ENCODE measurements at regions of chr1 and their contacts with region 1.

Region 1: GRCh38 chr1:45490626-45491486 is at the start of gene TESK2:
- DNase-seq: peak; percentile 100
- ATAC-seq: peak; percentile 94
- H3K4me3 ChIP-seq: peak within 1 kb of the TSS; percentile 83
- H3K27ac ChIP-seq: peak within 1 kb of the TSS; percentile 32; the same call in 1 of the 2 replicates
- H3K4me1 ChIP-seq: peaks cover 4% of the 10 kb centered on the region; the same call in 1 of the 2 replicates
- H3K27me3 ChIP-seq: no peaks in the 10 kb centered on the region
- CTCF ChIP-seq: peak in 1 of 3 experiments; percentile 14; a peak in 1 of 6 replicates
- EP300 ChIP-seq: no peak
- POLR2A ChIP-seq: peak; percentile 88
- RAD21 ChIP-seq: no peak
- polyA plus RNA-seq, gene TESK2: 2.2 to 2.5 TPM

Region 2: GRCh38 chr1:44730741-44731512 is 759.9 kb before region 1 on chr1 and contains the start of gene RNU5D-1:
- CTCF ChIA-PET with region 1: interaction called, 9 read pairs
- POLR2A ChIA-PET with region 1: interaction called, 5 read pairs
- RAD21 ChIA-PET with region 1: interaction called, 4 read pairs
- SMC1A ChIA-PET with region 1: interaction called, 3 read pairs
- in situ Hi-C with region 1: loop called (anchors 10 kb)
- intact Hi-C with region 1: loop called (anchors 5 kb)
- DNase-seq: peak; percentile 98
- ATAC-seq: peak; percentile 87
- H3K4me3 ChIP-seq: peak within 1 kb of the TSS; percentile 47; the same call in 1 of the 2 replicates
- H3K27ac ChIP-seq: peak within 1 kb of the TSS; percentile 100
- H3K4me1 ChIP-seq: peaks cover 14% of the 10 kb centered on the region
- H3K27me3 ChIP-seq: no peaks in the 10 kb centered on the region
- CTCF ChIP-seq: peak; percentile 72 to 88 (median 83)
- EP300 ChIP-seq: peak in 1 of 2 experiments; percentile 44; a peak in 1 of 4 replicates
- POLR2A ChIP-seq: peak; percentile 96
- RAD21 ChIP-seq: peak; percentile 58
- polyA plus RNA-seq, gene RNU5D-1: not detected

Region 3: GRCh38 chr1:45326627-45327623 is 163.9 kb before region 1 on chr1 and contains the start of gene HPDL:
- CTCF ChIA-PET with region 1: interaction called, 21 read pairs
- POLR2A ChIA-PET with region 1: no interaction called
- RAD21 ChIA-PET with region 1: interaction called, 8 read pairs
- SMC1A ChIA-PET with region 1: interaction called, 8 read pairs
- in situ Hi-C with region 1: no loop called
- intact Hi-C with region 1: no loop called
- DNase-seq: no peak
- ATAC-seq: peak; percentile 89
- H3K4me3 ChIP-seq: peak within 1 kb of the TSS; percentile 82
- H3K27ac ChIP-seq: peak within 1 kb of the TSS; percentile 80
- H3K4me1 ChIP-seq: peaks cover 16% of the 10 kb centered on the region; the same call in 1 of the 2 replicates
- H3K27me3 ChIP-seq: no peaks in the 10 kb centered on the region
- CTCF ChIP-seq: 0 out of 6 replicates have a peak, but pooled peaks of 1 of the 3 experiments have one; percentile 5
- EP300 ChIP-seq: no peak
- POLR2A ChIP-seq: peak; percentile 91
- RAD21 ChIP-seq: no peak
- polyA plus RNA-seq, gene HPDL: 1.3 to 3.6 TPM

Region 4: DNA sequence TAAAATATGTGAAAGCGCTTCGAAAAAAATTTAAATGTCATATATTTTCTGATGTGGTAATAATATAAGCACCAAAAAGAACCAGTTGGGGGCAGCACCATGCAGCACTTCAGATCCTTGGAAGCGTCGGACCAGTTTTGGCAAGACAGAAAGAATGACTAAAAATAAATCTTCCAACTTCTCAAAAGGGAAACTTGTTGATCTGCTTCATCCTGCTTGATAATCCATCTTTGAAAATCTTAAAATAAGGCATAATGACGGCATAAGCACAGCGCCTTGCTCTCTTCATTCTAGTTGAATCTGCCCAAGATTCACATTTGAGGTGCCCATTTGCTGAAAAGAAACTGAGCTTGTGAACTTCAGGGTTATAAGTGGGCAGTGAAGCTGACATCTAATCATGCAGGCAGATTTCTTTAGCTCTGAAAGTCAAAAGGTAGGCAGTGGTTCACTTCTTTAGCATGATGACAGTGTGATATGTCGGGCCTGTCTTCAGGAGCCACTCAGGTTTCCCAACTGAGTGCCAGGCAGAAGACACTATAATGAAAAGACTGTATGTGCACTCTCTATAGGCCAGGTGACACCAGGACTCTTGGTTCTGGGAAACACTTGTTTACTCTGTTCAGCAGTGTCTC is 130.9 kb before region 1 on chr1:
- CTCF ChIA-PET with region 1: interaction called, 508 read pairs
- POLR2A ChIA-PET with region 1: interaction called, 31 read pairs
- RAD21 ChIA-PET with region 1: interaction called, 319 read pairs
- SMC1A ChIA-PET with region 1: interaction called, 369 read pairs
- in situ Hi-C with region 1: loop called (anchors 5 kb)
- intact Hi-C with region 1: loop called (anchors 1 kb)
- DNase-seq: no peak
- ATAC-seq: peak; percentile 81
- H3K4me3 ChIP-seq: no peak overlapping the region
- H3K27ac ChIP-seq: no peak overlapping the region
- H3K4me1 ChIP-seq: peaks cover 9% of the 10 kb centered on the region
- H3K27me3 ChIP-seq: no peaks in the 10 kb centered on the region
- CTCF ChIP-seq: peak; percentile 49 to 78 (median 59); a peak in 5 of 6 replicates
- EP300 ChIP-seq: no peak
- POLR2A ChIP-seq: no peak
- RAD21 ChIP-seq: peak; percentile 97

Region 5: GRCh38 chr1:45410850-45411314 is 80.0 kb before region 1 on chr1:
- CTCF ChIA-PET with region 1: interaction called, 23 read pairs
- POLR2A ChIA-PET with region 1: no interaction called
- RAD21 ChIA-PET with region 1: interaction called, 5 read pairs
- SMC1A ChIA-PET with region 1: interaction called, 6 read pairs
- in situ Hi-C with region 1: no loop called
- intact Hi-C with region 1: no loop called
- DNase-seq: no peak
- ATAC-seq: no peak
- H3K4me3 ChIP-seq: no peak overlapping the region
- H3K27ac ChIP-seq: no peak overlapping the region
- H3K4me1 ChIP-seq: peaks cover 14% of the 10 kb centered on the region
- H3K27me3 ChIP-seq: no peaks in the 10 kb centered on the region
- CTCF ChIP-seq: no peak
- EP300 ChIP-seq: no peak
- POLR2A ChIP-seq: no peak
- RAD21 ChIP-seq: no peak

Region 6: DNA sequence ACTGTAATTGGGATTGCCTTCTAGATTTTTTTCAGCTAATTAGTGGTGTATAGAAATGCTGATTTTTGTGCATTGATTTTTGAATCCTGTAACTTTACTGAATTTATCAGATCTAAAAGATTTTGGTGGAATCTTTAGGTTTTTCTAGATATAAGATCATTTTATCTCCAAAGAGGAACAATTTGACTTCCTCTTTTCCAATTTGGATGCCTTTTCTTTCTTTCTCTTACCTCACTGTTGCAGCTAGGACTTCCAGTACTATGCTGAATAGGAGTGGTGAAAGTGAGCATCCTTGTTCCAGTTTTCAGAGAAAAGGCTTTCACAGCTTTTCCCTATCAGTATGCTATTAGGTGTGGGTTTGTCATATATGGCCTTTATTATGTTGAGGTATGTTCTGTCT is 53.5 kb before region 1 on chr1:
- CTCF ChIA-PET with region 1: no interaction called
- POLR2A ChIA-PET with region 1: no interaction called
- RAD21 ChIA-PET with region 1: no interaction called
- SMC1A ChIA-PET with region 1: no interaction called
- in situ Hi-C with region 1: no loop called
- intact Hi-C with region 1: no loop called
- DNase-seq: no peak
- ATAC-seq: no peak
- H3K4me3 ChIP-seq: no peak overlapping the region
- H3K27ac ChIP-seq: no peak overlapping the region
- H3K4me1 ChIP-seq: no peaks in the 10 kb centered on the region
- H3K27me3 ChIP-seq: no peaks in the 10 kb centered on the region
- CTCF ChIP-seq: no peak
- EP300 ChIP-seq: no peak
- POLR2A ChIP-seq: no peak
- RAD21 ChIP-seq: no peak

Region 7: DNA sequence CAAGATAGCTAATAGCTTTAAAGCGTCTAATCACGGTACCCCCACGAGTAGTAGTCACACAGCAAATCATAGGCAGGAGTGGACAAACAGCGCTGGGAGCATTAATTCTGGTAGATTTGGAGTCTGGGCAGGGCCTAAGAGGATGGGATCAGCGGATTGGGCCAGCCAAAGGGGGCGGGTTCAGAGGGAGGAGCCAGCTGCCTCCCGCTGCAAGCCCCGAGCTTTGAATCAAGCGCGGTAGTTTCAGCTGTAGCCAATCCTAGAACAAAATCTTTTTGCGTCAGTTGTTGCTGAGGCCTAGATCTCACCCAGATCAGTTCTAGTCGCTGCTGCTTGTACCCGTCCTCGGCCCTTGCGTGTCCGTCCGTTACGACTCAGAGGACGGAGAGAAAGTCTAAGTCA is 92.4 kb after region 1 on chr1:
- CTCF ChIA-PET with region 1: interaction called, 9 read pairs
- POLR2A ChIA-PET with region 1: interaction called, 5 read pairs
- RAD21 ChIA-PET with region 1: interaction called, 12 read pairs
- SMC1A ChIA-PET with region 1: interaction called, 12 read pairs
- in situ Hi-C with region 1: no loop called
- intact Hi-C with region 1: no loop called
- DNase-seq: peak; percentile 98
- ATAC-seq: peak; percentile 89
- H3K4me3 ChIP-seq: peak overlapping the region; percentile 94
- H3K27ac ChIP-seq: peak overlapping the region; percentile 97
- H3K4me1 ChIP-seq: peaks cover 12% of the 10 kb centered on the region; the same call in 1 of the 2 replicates
- H3K27me3 ChIP-seq: no peaks in the 10 kb centered on the region
- CTCF ChIP-seq: no peak
- EP300 ChIP-seq: no peak
- POLR2A ChIP-seq: no peak
- RAD21 ChIP-seq: no peak

Region 8: DNA sequence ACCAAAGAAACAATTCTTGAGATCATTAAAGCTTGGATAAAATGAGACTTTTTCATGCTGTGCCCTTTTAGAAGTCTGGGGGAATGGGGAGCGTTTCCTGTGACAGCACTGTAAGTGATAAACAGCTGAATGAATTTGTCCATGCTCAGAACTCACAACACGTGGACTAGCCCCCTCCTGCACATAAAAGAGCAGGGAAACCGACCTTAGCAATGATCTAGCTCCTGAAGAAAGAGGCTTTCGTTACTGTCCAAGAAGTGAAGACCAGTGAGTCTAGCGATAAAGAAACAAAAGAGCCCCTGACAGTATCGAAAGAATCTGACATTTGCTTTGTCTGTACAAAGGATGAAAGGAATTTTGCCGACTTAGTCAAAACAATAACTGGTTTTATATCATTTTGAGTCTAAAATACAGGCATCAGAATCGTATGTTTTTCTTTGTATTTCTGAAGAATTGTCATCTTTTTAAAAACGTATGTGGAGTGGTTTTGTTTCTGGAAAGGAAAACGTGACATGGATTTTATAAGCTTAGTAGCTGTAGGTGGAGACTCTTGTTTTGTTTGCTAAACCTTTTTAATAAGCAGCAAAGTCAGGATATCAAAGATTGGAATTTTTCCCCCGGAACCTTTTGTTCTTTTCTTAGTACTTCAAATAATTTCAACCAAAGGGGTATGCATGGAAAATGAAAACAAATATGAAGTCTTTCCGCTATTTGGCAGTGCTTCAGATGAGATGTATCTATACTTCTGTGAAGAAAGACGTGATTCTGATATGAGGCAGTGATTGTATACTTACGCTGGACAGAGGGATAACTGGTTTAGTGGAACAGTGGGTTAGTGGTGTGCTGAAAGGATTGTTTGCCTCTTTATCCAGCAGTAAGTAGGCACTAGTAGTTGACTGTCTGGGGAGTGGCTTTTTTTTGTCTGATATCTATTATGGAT is 373.6 kb after region 1 on chr1:
- CTCF ChIA-PET with region 1: no interaction called
- POLR2A ChIA-PET with region 1: no interaction called
- RAD21 ChIA-PET with region 1: no interaction called
- SMC1A ChIA-PET with region 1: no interaction called
- in situ Hi-C with region 1: no loop called
- intact Hi-C with region 1: no loop called
- DNase-seq: no peak
- ATAC-seq: no peak
- H3K4me3 ChIP-seq: no peak overlapping the region
- H3K27ac ChIP-seq: no peak overlapping the region
- H3K4me1 ChIP-seq: peaks cover 9% of the 10 kb centered on the region
- H3K27me3 ChIP-seq: no peaks in the 10 kb centered on the region
- CTCF ChIP-seq: no peak
- EP300 ChIP-seq: no peak
- POLR2A ChIP-seq: no peak
- RAD21 ChIP-seq: no peak

Region 9: GRCh38 chr1:46148318-46148717 is 657.5 kb after region 1 on chr1:
- CTCF ChIA-PET with region 1: no interaction called
- POLR2A ChIA-PET with region 1: no interaction called
- RAD21 ChIA-PET with region 1: no interaction called
- SMC1A ChIA-PET with region 1: no interaction called
- in situ Hi-C with region 1: no loop called
- intact Hi-C with region 1: no loop called
- DNase-seq: no peak
- ATAC-seq: no peak
- H3K4me3 ChIP-seq: no peak overlapping the region
- H3K27ac ChIP-seq: no peak overlapping the region
- H3K4me1 ChIP-seq: no peaks in the 10 kb centered on the region
- H3K27me3 ChIP-seq: no peaks in the 10 kb centered on the region
- CTCF ChIP-seq: no peak
- EP300 ChIP-seq: no peak
- POLR2A ChIP-seq: no peak
- RAD21 ChIP-seq: no peak

Measured in GM12878 (cell line).